Gastrocnemius medialis (tissue), 4 donors: ENCODE measurements at regions of chr2 and their contacts with region 1.

Region 1: GRCh38 chr2:43484323-43484930 is 111.4 kb downstream of the THADA start:
- DNase-seq: no peak
- ATAC-seq: peak in 1 of 2 donors; percentile 59
- H3K4me3 ChIP-seq: no peak overlapping the region
- H3K27ac ChIP-seq: peak overlapping the region; percentile 68 to 79 (median 76)
- H3K4me1 ChIP-seq: peaks cover 29 to 34% of the 10 kb centered on the region in 2 donors
- H3K27me3 ChIP-seq: no peaks in the 10 kb centered on the region
- CTCF ChIP-seq: peak; percentile 66 to 88 (median 70)
- POLR2A ChIP-seq: no peak

Region 2: GRCh38 chr2:42835577-42836371 is 648.7 kb before region 1 on chr2:
- in situ Hi-C with region 1: loop called in 2 of 4 experiments (anchors 10 kb)
- intact Hi-C with region 1: no loop called
- DNase-seq: peak; percentile 35 to 73
- ATAC-seq: peak; percentile 88 to 89
- H3K4me3 ChIP-seq: no peak overlapping the region
- H3K27ac ChIP-seq: peak overlapping the region; percentile 36 to 62 (median 52)
- H3K4me1 ChIP-seq: peaks cover 0 to 2% of the 10 kb centered on the region in 2 donors
- H3K27me3 ChIP-seq: no peaks in the 10 kb centered on the region
- CTCF ChIP-seq: no peak
- POLR2A ChIP-seq: no peak

Region 3: GRCh38 chr2:42974721-42975717 is 509.4 kb before region 1 on chr2:
- in situ Hi-C with region 1: loop called in 3 of 4 experiments (anchors 10 kb)
- intact Hi-C with region 1: loop called (anchors 1 kb)
- DNase-seq: peak; percentile 63 to 65
- ATAC-seq: peak; percentile 81 to 82
- H3K4me3 ChIP-seq: peak overlapping the region; percentile 41 to 60 (median 48)
- H3K27ac ChIP-seq: peak overlapping the region in 3 of 4 donors; percentile 19 to 63 (median 54)
- H3K4me1 ChIP-seq: peaks cover 9 to 13% of the 10 kb centered on the region in 2 donors
- H3K27me3 ChIP-seq: no peaks in the 10 kb centered on the region
- CTCF ChIP-seq: peak; percentile 93 to 95 (median 94)
- POLR2A ChIP-seq: no peak

Region 4: DNA sequence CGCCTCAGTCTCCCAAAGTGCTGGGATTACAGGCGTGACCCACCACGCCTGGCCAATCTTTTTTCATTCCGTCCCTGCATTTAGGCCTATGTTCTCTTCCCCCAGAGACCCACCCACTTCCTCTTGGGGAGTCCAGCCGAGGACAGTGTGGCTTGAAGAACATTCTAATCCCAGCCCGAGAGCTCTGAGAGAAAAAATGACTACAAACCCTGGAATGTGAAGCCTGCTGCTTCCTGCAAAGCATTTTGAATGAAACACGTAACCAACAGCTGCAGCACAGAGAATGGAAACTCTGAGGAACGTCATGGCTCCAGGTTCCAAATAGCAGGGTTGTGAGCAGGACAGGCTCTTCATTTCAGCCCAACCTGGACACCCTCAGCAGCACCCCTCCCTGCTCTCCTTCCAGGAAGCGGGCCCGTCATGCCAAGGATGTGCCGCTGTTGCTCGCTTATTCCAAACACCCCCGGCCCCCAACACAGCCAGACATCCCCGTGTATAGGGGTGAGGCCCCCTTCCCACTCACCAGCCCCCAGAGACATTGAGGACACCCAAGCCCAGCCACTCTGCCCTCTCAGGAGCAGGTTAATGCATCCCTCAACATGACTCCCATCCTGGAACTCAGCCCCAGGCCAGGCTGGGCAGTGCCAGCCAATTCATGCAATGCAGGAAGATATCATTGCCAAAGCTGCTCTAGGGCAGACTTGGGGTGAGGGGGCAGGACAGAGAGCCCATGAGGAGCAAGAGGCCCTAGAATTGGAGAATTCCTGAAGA is 397.8 kb before region 1 on chr2:
- in situ Hi-C with region 1: no loop called
- intact Hi-C with region 1: loop called (anchors 5 kb)
- DNase-seq: peak; percentile 74 to 79
- ATAC-seq: peak; percentile 76 to 86
- H3K4me3 ChIP-seq: no peak overlapping the region
- H3K27ac ChIP-seq: peak overlapping the region; percentile 78 to 90 (median 86)
- H3K4me1 ChIP-seq: peaks cover 53 to 59% of the 10 kb centered on the region in 2 donors
- H3K27me3 ChIP-seq: no peaks in the 10 kb centered on the region
- CTCF ChIP-seq: no peak
- POLR2A ChIP-seq: peak in 1 of 2 donors; percentile 42

Region 5: GRCh38 chr2:43169987-43170386 is 314.4 kb before region 1 on chr2:
- in situ Hi-C with region 1: loop called in 1 of 4 experiments (anchors 10 kb)
- intact Hi-C with region 1: no loop called
- DNase-seq: peak in 1 of 2 donors; percentile 53
- ATAC-seq: peak; percentile 26 to 55
- H3K4me3 ChIP-seq: no peak overlapping the region
- H3K27ac ChIP-seq: peak overlapping the region in 2 of 4 donors; percentile 51 to 53
- H3K4me1 ChIP-seq: peaks cover 0 to 10% of the 10 kb centered on the region in 2 donors
- H3K27me3 ChIP-seq: no peaks in the 10 kb centered on the region
- CTCF ChIP-seq: peak; percentile 39 to 71 (median 70)
- POLR2A ChIP-seq: no peak

Region 6: GRCh38 chr2:43278337-43279220 is 205.8 kb before region 1 on chr2:
- in situ Hi-C with region 1: no loop called
- intact Hi-C with region 1: loop called (anchors 1 kb)
- DNase-seq: no peak
- ATAC-seq: peak in 1 of 2 donors; percentile 46
- H3K4me3 ChIP-seq: no peak overlapping the region
- H3K27ac ChIP-seq: no peak overlapping the region
- H3K4me1 ChIP-seq: peaks cover 10 to 17% of the 10 kb centered on the region in 2 donors
- H3K27me3 ChIP-seq: no peaks in the 10 kb centered on the region
- CTCF ChIP-seq: no peak
- POLR2A ChIP-seq: no peak

Region 7: DNA sequence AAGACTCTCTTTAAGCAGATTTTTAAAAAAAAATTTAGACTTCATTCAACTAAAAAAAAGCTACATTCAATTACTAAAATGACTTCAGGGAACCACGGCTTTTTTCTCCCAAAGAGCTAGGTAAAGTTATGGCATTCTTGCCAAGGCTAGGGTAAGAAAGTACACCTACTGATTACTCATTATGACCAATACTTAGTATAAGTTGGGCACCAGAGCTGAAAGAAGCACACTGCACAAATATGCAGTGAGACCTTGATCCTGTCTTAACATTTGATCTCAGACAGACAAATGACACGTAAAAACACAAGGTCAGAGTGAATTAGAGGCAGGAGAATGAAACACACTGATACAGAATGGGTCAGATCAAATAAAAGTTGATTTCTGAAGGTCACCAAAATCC is 22.7 kb after region 1 on chr2:
- in situ Hi-C with region 1: no loop called
- intact Hi-C with region 1: no loop called
- DNase-seq: no peak
- ATAC-seq: no peak
- H3K4me3 ChIP-seq: no peak overlapping the region
- H3K27ac ChIP-seq: no peak overlapping the region
- H3K4me1 ChIP-seq: no peaks in the 10 kb centered on the region
- H3K27me3 ChIP-seq: no peaks in the 10 kb centered on the region
- CTCF ChIP-seq: no peak
- POLR2A ChIP-seq: no peak